Caco-2 (cell line): ENCODE measurements at regions of chr6 and their contacts with region 1.

Region 1: GRCh38 chr6:76682842-76683241 is 610.4 kb upstream of the IMPG1 start:
- DNase-seq: no peak
- H3K4me3 ChIP-seq: no peak overlapping the region
- H3K4me3 Mint-ChIP-seq: no peak overlapping the region
- H3K27ac Mint-ChIP-seq: no peak overlapping the region
- H3K4me1 ChIP-seq: no peaks in the 10 kb centered on the region
- H3K4me1 Mint-ChIP-seq: no peaks in the 10 kb centered on the region
- H3K27me3 ChIP-seq: no peaks in the 10 kb centered on the region
- H3K27me3 Mint-ChIP-seq: peaks cover 6% of the 10 kb centered on the region
- CTCF ChIP-seq: peak; percentile 23 to 30

Region 2: GRCh38 chr6:76120302-76120701 is 562.5 kb before region 1 on chr6:
- CTCF ChIA-PET with region 1: no interaction called
- POLR2A ChIA-PET with region 1: no interaction called
- intact Hi-C with region 1: no loop called
- DNase-seq: no peak
- H3K4me3 ChIP-seq: no peak overlapping the region
- H3K4me3 Mint-ChIP-seq: no peak overlapping the region
- H3K27ac Mint-ChIP-seq: no peak overlapping the region
- H3K4me1 ChIP-seq: no peaks in the 10 kb centered on the region
- H3K4me1 Mint-ChIP-seq: no peaks in the 10 kb centered on the region
- H3K27me3 ChIP-seq: no peaks in the 10 kb centered on the region
- H3K27me3 Mint-ChIP-seq: peaks cover 13% of the 10 kb centered on the region
- CTCF ChIP-seq: no peak

Region 3: DNA sequence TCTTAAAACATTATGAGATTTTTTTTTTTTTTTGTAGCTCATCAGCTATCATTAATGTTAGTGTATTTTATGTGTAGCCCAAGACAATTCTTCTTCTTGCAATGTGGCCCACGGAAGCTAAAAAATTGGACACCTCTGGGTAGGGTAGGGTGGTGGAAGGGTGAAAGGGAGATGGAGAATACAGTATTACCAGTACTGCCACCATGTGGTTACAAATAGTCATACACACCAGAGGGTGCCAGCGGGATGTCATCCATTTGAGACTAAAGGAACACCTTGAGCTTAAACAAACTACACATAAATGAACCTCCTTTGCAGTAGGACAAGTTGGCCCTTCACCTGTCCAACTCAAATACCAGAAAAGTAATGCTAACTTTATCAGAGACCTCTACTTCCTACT is 178.6 kb after region 1 on chr6:
- CTCF ChIA-PET with region 1: no interaction called
- POLR2A ChIA-PET with region 1: no interaction called
- intact Hi-C with region 1: loop called (anchors 5 kb)
- DNase-seq: peak in 1 of 2 experiments; percentile 46
- H3K4me3 ChIP-seq: no peak overlapping the region
- H3K4me3 Mint-ChIP-seq: no peak overlapping the region
- H3K27ac Mint-ChIP-seq: no peak overlapping the region
- H3K4me1 ChIP-seq: no peaks in the 10 kb centered on the region
- H3K4me1 Mint-ChIP-seq: no peaks in the 10 kb centered on the region
- H3K27me3 ChIP-seq: no peaks in the 10 kb centered on the region
- H3K27me3 Mint-ChIP-seq: no peaks in the 10 kb centered on the region
- CTCF ChIP-seq: peak; percentile 30 to 52

Region 4: GRCh38 chr6:76877238-76877553 is 194.4 kb after region 1 on chr6:
- CTCF ChIA-PET with region 1: interaction called, 3 read pairs
- POLR2A ChIA-PET with region 1: no interaction called
- intact Hi-C with region 1: loop called (anchors 5 kb)
- DNase-seq: no peak
- H3K4me3 ChIP-seq: no peak overlapping the region
- H3K4me3 Mint-ChIP-seq: peak overlapping the region; percentile 56
- H3K27ac Mint-ChIP-seq: no peak overlapping the region
- H3K4me1 ChIP-seq: no peaks in the 10 kb centered on the region
- H3K4me1 Mint-ChIP-seq: no peaks in the 10 kb centered on the region
- H3K27me3 ChIP-seq: no peaks in the 10 kb centered on the region
- H3K27me3 Mint-ChIP-seq: no peaks in the 10 kb centered on the region
- CTCF ChIP-seq: no peak